ENCODE measurements at regions of chr10 and their contacts with region 1.

Region 1: GRCh38 chr10:13707156-13707881 is 120.6 kb downstream of the PRPF18 start:
- DNase-seq: peak; percentile 88
- ATAC-seq: peak; percentile 87

Region 2: GRCh38 chr10:13673156-13673555 is 34.2 kb before region 1 on chr10:
- intact Hi-C with region 1: loop called (anchors 5 kb)
- DNase-seq: no peak
- ATAC-seq: no peak

Region 3: DNA sequence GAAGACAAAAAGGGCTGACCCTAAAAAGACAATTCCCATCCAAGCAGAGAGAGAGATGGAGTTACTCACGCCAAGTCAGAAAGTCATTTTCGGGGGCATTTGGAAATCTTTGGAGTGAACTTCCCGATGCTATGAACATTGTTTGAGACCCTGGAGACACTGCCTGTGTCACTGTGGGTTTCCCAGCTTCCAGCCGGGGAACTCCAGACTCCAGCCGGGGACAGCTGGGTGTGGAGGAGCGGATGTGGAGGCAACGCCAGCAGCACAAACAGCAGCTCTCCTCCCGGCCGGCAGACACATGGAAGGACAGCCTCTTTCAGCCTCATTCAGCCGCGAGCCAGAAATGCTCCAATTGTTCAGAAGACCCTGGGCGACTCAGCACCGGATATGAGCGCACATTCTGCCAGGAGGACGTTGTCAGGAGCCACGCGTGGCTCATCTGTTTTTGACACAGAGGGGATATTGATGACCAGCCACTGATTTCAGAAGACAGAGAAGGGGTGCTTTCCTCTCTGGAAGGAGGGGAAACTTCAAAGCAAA is 23.0 kb before region 1 on chr10:
- intact Hi-C with region 1: loop called (anchors 1 kb)
- DNase-seq: peak; percentile 89
- ATAC-seq: peak; percentile 75

Region 4: GRCh38 chr10:13769955-13770354 is 62.6 kb after region 1 on chr10:
- intact Hi-C with region 1: loop called (anchors 5 kb)
- DNase-seq: no peak
- ATAC-seq: no peak

Region 5: DNA sequence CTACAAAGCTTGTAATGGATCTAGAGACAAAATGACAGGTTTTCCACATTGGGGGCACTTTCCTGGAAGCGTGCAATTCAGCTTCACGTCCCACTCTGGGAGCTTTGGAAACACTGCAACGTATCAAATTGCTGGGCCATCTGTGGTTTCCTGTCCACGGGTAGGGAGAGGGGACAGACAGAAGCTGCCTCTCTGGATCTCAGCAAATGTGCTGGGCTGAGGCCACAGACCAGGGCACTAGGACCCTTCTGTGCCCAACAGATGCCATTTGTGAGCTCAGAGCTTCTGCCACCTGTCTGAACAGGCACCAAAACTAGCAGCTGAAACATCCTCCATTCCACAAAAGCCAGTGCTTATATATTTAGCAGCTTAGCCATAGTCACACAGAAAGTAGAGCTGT is 664.3 kb after region 1 on chr10:
- intact Hi-C with region 1: no loop called
- DNase-seq: no peak
- ATAC-seq: no peak